Activated CD4-positive, alpha-beta T cell treated with anti-CD3 and anti-CD28 coated beads, Interleukin-2, amount 10 ng/mL, durations not matched to agents 24 days and 14 days (primary cell): ENCODE measurements at regions of chr2 and their contacts with region 1.

Region 1: GRCh38 chr2:162073888-162074645 is at the start of gene DPP4:
- DNase-seq: peak; percentile 89
- H3K4me3 Mint-ChIP-seq: peak within 1 kb of the TSS; percentile 95
- H3K27ac Mint-ChIP-seq: peak within 1 kb of the TSS; percentile 96
- H3K4me1 Mint-ChIP-seq: peaks cover 46% of the 10 kb centered on the region
- H3K27me3 Mint-ChIP-seq: no peaks in the 10 kb centered on the region
- total RNA-seq, gene DPP4: 65.4 and 68.0 TPM in 2 replicates

Region 2: DNA sequence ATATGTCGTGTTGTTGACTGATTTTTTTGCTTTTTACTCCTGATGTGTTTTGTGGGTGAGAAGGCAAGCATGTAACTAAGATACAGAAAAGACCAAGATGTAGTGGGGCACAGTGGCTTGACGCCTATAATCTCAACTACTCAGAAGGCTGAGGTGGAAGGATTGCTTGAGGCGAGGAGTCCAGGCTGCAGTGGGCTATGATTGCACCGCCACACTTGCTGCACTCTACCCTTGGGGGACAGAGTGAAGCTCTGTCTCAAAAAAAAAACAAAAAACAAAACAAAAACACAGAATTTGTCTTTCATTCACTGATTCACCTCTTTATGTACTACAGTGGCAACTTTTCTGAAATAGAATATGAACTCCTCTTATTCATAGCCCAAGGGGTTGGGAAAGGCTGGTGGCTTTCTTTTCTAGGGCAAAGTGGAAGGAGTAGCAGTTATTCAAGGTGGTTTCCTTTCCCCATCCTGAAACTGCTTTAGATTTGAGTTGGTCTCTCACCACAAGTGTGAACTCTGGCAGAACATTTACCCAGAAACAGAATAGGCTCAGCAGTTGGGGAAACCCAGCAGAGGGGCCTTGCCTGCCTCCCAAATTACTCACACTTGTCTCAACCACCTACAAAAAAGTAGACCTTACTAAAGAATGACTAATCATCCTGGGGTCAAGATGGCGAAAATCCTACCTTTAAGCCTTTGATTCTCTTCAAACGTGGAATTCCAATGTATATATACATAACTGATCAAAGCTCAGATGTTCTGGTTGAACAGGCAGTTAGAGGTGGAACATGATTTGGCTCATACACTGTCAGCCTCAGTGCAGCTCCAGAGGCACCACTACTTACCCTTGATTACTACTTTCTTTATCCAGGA is 907.3 kb before region 1 on chr2:
- intact Hi-C with region 1: loop called (anchors 5 kb)
- DNase-seq: peak; percentile 90
- H3K4me3 Mint-ChIP-seq: peak overlapping the region; percentile 69
- H3K27ac Mint-ChIP-seq: peak overlapping the region; percentile 94
- H3K4me1 Mint-ChIP-seq: peaks cover 76% of the 10 kb centered on the region
- H3K27me3 Mint-ChIP-seq: no peaks in the 10 kb centered on the region

Region 3: GRCh38 chr2:161965994-161966393 is 108.1 kb before region 1 on chr2:
- intact Hi-C with region 1: loop called (anchors 1 kb)
- DNase-seq: no peak
- H3K4me3 Mint-ChIP-seq: no peak overlapping the region
- H3K27ac Mint-ChIP-seq: no peak overlapping the region
- H3K4me1 Mint-ChIP-seq: peaks cover 39% of the 10 kb centered on the region
- H3K27me3 Mint-ChIP-seq: no peaks in the 10 kb centered on the region

Region 4: GRCh38 chr2:162013514-162014475 is 60.3 kb before region 1 on chr2:
- intact Hi-C with region 1: loop called (anchors 1 kb)
- DNase-seq: peak; percentile 66
- H3K4me3 Mint-ChIP-seq: peak overlapping the region; percentile 78
- H3K27ac Mint-ChIP-seq: peak overlapping the region; percentile 95
- H3K4me1 Mint-ChIP-seq: peaks cover 73% of the 10 kb centered on the region
- H3K27me3 Mint-ChIP-seq: no peaks in the 10 kb centered on the region

Region 5: GRCh38 chr2:162025121-162026031 is 48.7 kb before region 1 on chr2:
- intact Hi-C with region 1: loop called (anchors 2 kb)
- DNase-seq: no peak
- H3K4me3 Mint-ChIP-seq: peak overlapping the region; percentile 1
- H3K27ac Mint-ChIP-seq: peak overlapping the region; percentile 14
- H3K4me1 Mint-ChIP-seq: peaks cover 54% of the 10 kb centered on the region
- H3K27me3 Mint-ChIP-seq: no peaks in the 10 kb centered on the region

Region 6: DNA sequence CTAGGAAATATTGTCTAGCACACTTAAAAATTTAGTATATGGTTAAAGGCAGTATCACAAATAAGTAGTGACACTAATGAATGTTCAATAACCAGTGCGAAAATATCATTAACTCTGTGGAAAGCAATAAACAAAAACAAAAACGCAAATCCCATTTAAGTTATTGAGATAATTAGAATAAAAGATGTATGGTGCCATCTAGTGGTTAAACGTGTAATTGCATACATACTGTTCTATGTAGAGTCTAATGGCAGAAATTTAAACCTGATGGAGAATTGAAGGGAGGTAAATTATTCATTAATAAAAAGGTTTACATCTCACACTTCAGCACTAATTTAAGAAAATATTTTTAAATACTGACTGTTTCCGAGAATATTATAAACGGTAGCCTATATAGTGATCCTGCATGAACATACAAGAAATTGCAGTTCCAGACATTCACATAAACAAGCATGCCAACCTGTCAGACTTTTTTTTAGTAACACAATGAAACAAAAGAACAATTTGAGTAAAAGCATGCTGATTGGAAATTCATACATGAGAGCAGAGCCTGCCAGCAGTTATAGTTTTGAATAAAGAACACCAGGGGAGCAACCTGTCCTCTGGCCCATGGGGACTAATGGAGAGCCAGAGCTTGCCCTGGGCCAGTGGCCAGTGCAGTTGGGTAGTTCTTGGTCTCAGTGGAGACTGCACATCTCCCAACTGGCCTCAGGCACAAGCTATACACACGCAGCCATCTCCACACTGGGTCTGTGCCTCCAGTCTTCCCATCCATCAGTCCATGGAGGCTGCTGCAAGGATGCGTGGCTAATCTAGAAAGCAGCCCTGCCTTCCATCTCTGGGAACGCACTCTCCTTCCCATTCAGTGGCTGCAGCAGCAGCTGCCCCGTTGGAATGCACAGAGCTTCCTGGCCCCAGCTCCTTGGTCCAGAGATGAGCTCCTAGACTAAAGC is 50.0 kb after region 1 on chr2:
- intact Hi-C with region 1: loop called (anchors 2 kb)
- DNase-seq: peak; percentile 73
- H3K4me3 Mint-ChIP-seq: no peak overlapping the region
- H3K27ac Mint-ChIP-seq: no peak overlapping the region
- H3K4me1 Mint-ChIP-seq: peaks cover 16% of the 10 kb centered on the region
- H3K27me3 Mint-ChIP-seq: peaks cover 7% of the 10 kb centered on the region

Region 7: GRCh38 chr2:162155096-162155495 is 81.0 kb after region 1 on chr2:
- intact Hi-C with region 1: no loop called
- DNase-seq: no peak
- H3K4me3 Mint-ChIP-seq: no peak overlapping the region
- H3K27ac Mint-ChIP-seq: no peak overlapping the region
- H3K4me1 Mint-ChIP-seq: peaks cover 4% of the 10 kb centered on the region
- H3K27me3 Mint-ChIP-seq: peaks cover 50% of the 10 kb centered on the region

Region 8: DNA sequence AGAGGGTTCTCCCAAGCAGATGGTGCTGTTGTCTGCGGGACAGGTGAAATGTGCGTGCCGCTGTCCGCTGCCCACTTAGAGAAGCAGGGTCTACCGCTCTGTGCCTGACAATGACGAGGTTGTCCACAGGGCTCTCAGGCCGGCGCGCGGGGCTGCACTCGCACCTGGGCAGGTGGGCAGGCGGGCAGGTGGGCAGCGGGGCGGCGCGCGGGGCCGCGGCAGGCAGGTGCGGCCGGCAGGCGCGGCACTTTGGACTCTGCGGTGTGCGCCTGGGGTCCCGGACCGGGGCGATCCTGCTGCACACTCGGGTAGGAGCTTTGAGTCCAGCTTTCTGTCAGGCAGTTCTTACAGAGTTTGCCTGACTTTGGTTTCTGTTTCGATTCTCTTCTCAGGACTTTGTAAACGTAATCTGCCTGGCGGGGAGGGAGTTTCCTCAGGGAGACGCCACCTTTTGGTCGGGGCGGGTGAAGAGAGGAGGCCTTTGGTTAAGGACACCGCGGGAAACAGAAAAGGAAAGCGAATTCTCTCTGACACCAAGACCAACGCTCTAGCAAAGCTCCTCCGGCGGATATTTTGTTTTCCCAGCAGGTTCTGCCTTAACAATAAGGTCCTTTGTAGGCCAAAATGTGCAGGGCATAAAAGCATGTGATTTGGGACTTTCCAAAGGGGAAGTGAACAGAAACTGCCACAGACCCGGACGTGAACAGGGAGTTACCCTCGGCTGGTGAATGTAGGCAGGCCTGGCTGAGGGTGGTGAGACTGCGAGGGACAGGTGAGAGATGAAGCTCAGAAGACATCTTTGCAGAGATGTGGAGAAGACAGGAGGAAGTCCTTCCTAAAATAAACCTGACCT is 244.5 kb after region 1 on chr2 and contains the start of gene IFIH1:
- intact Hi-C with region 1: loop called (anchors 5 kb)
- DNase-seq: peak; percentile 95
- H3K4me3 Mint-ChIP-seq: peak within 1 kb of the TSS; percentile 87
- H3K27ac Mint-ChIP-seq: peak within 1 kb of the TSS; percentile 93
- H3K4me1 Mint-ChIP-seq: peaks cover 54% of the 10 kb centered on the region
- H3K27me3 Mint-ChIP-seq: no peaks in the 10 kb centered on the region
- total RNA-seq, gene IFIH1: 22.5 and 26.3 TPM in 2 replicates